ENCODE measurements at regions of chr18 and their contacts with region 1.

Region 1: DNA sequence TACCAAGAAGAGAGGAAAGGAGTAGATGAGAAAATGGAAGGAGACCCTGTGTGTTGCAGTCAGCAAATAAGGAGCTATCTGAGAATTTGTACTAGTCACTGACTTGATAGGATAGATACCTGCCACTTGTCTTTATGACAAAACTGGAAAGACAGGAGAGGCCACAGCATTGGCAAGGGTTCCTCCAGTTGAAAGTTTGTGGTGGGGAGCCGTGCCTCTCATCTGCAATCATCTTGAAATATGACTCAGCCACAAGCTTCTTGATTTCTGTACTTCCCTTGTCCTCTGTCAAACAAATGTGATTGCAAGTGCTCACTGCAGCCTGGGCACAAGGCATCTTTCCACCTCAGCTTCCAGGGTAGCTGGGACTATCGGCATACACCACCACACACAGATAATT is 99.1 kb downstream of the GREB1L start:
- DNase-seq: no peak
- ATAC-seq: no peak
- H3K4me3 ChIP-seq: no peak overlapping the region
- H3K27ac ChIP-seq: no peak overlapping the region
- H3K4me1 ChIP-seq: no peaks in the 10 kb centered on the region
- H3K27me3 ChIP-seq: no peaks in the 10 kb centered on the region
- CTCF ChIP-seq: no peak
- POLR2A ChIP-seq: no peak

Region 2: DNA sequence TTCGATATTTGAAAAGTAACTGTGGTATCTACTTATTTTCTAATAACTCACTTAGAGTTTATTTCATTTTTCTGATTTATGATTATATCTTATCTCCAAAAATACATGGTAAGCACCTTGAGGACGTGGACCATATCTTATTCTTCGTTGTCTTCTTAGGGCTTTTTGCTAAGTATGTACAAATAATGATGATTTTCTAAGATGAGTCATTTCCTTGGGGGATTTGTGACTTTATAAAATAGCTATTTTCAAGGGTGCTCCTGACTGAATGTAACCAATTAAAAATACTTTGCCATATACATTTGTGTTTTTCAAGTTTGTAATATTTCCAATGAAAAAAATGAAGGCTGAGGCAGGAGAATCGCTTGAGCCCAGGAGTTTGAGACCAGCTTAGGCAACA is 42.8 kb before region 1 on chr18:
- intact Hi-C with region 1: loop called in 1 of 10 experiments (anchors 10 kb)
- DNase-seq: no peak
- ATAC-seq: no peak
- H3K4me3 ChIP-seq: no peak overlapping the region
- H3K27ac ChIP-seq: no peak overlapping the region
- H3K4me1 ChIP-seq: no peaks in the 10 kb centered on the region
- H3K27me3 ChIP-seq: peaks cover 0 to 2% (median 0%) of the 10 kb centered on the region in 9 donors
- CTCF ChIP-seq: no peak
- POLR2A ChIP-seq: no peak

Region 3: DNA sequence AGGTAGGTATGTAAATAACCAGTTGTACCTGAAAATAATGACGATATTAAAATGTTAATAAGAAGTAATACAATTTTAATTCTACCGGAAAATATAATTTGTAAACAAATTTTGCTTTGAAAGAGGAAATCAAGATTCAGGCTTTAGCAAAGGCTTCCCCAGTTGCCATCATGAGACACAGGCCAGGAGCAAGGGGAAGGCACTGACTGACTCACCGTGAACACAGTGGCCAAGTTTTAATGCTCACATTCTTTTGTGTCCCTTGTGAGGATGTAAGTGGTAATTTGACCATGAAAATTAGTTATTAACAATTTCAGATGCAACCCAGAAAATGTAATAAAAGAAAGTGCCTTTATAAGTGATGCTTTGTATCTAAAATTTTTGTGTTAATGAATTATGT is 65.0 kb after region 1 on chr18:
- intact Hi-C with region 1: loop called in 2 of 10 experiments (anchors 10 kb)
- DNase-seq: no peak
- ATAC-seq: no peak
- H3K4me3 ChIP-seq: no peak overlapping the region
- H3K27ac ChIP-seq: no peak overlapping the region
- H3K4me1 ChIP-seq: no peaks in the 10 kb centered on the region
- H3K27me3 ChIP-seq: no peaks in the 10 kb centered on the region
- CTCF ChIP-seq: no peak
- POLR2A ChIP-seq: no peak